PC-9 (cell line): ENCODE measurements at regions of chr1 and their contacts with region 1.

Region 1: GRCh38 chr1:222798116-222798515 is 16.7 kb upstream of the DISP1 start:
- DNase-seq: peak; percentile 49 to 81
- H3K4me3 ChIP-seq: no peak overlapping the region
- H3K27ac ChIP-seq: no peak overlapping the region
- H3K4me1 ChIP-seq: peaks cover 14% of the 10 kb centered on the region
- H3K27me3 ChIP-seq: no peaks in the 10 kb centered on the region
- CTCF ChIP-seq: no peak

Region 2: DNA sequence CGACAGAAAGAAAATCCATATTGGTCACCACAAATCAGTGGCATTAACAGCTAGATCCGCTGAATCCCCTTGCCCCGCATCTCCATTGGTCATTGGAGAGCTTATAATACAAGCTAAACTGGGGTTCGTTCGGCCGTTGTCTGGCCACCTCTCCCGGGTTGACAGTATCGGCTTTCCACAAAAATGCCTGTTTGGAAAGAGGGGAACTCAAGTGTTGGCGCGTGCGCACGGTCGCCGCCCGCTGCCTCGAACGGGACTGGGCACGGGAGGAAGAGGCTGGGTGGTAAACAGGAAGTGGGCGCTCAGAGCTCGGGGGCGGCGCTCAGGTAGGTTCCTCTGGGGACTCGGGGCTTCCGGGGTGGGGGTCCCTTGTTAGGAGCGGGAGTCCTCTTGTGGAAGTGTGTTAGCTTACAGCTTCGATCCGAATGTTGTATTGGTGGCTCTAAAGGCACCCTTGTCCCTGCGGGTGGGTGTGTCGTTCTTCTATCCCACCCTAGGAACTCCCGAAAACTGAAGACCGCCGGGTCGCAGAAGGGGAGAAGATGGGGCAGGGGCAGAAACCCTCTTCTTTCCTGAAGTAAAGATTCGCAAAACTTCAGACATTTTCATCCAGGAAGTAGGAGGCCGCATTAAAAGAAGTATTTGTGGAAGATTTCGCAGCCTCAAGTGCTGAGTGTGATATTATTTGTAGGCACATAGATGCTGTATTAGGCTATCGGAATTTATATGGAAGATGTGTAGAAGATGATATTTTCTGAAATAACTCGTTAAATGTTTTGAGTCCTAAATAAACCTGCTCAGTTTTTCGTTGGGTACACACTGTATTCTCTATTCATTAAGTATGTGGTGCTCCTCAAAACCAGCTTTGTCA is 84.8 kb before region 1 on chr1:
- CTCF ChIA-PET with region 1: no interaction called
- POLR2A ChIA-PET with region 1: interaction called, 12 read pairs
- intact Hi-C with region 1: no loop called
- DNase-seq: peak; percentile 84 to 93
- H3K4me3 ChIP-seq: peak overlapping the region; percentile 89
- H3K27ac ChIP-seq: peak overlapping the region; percentile 87
- H3K4me1 ChIP-seq: peaks cover 15% of the 10 kb centered on the region
- H3K27me3 ChIP-seq: no peaks in the 10 kb centered on the region
- CTCF ChIP-seq: no peak

Region 3: GRCh38 chr1:222736972-222737371 is 61.1 kb before region 1 on chr1 and contains the start of gene FAM177B:
- CTCF ChIA-PET with region 1: interaction called, 4 read pairs
- POLR2A ChIA-PET with region 1: interaction called, 10 read pairs
- intact Hi-C with region 1: no loop called
- DNase-seq: peak in 1 of 2 experiments; percentile 44
- H3K4me3 ChIP-seq: no peak within 1 kb of the TSS
- H3K27ac ChIP-seq: no peak within 1 kb of the TSS
- H3K4me1 ChIP-seq: peaks cover 7% of the 10 kb centered on the region; the same call in 1 of the 2 replicates
- H3K27me3 ChIP-seq: no peaks in the 10 kb centered on the region
- CTCF ChIP-seq: no peak
- total RNA-seq, gene FAM177B: not detected in 2 replicates

Region 4: DNA sequence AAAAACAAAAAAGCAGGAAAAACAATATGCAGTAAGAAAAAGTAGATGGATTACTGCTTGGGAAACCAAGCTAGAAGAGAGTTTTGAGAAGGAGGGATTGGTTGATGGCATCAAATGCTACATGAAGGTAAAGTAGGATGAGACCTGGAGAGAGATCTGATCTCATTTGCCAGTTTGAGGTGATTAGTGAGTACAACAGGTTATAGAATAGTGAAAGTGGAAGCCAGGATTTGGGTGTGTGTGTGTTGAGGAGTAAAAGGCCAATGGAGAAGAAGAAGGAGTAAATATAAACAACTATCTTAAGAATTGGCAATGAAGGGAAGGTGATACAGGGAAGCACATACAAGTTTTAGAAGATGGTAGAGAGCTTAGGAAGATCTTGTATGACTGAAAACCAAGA is 93.5 kb after region 1 on chr1:
- CTCF ChIA-PET with region 1: interaction called, 7 read pairs
- POLR2A ChIA-PET with region 1: interaction called, 34 read pairs
- intact Hi-C with region 1: no loop called
- DNase-seq: no peak
- H3K4me3 ChIP-seq: no peak overlapping the region
- H3K27ac ChIP-seq: no peak overlapping the region
- H3K4me1 ChIP-seq: peaks cover 15% of the 10 kb centered on the region
- H3K27me3 ChIP-seq: no peaks in the 10 kb centered on the region
- CTCF ChIP-seq: no peak